Activated T-helper 2 cell treated with anti-CD3 and anti-CD28 coated beads, Interferon-gamma antibody, Interleukin-2, Interleukin-4, amounts not matched to agents 10 μg/mL and 5 μg/mL and 100 μg/mL, durations not matched to agents 14 hours and 24 hours and 36 hours (primary cell): ENCODE measurements at regions of chr5 and their contacts with region 1.

Region 1: DNA sequence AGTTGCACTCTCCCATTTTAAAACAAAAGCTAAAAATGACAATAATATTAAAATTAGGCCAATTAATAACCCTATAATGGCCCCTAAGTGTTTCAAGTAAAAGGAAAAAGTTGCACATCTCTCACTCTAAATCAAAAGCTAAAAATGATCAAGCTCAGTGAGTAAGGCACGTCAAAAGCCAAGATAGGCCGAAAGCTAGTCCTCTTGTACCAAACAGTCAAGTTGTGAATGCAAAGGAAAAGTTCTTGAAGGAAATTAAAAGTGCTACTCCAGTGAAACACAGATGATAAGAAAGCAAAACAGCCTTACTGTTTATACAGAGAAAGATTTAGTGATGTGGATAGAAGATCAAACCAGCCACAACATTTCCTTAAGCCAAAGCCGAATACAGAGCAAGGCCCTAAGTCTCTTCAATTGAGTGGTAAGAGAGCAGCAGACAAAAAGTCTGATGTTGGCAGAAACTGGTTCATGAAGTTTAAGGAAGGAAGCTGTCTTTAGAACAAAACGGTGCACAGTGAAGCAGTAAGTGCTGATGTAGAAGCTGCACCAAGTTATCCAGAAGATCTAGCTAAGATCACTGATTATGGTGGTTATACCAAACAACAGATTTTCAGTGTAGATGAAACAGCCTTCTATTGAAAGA is 144.1 kb upstream of the ACOT12 start:
- DNase-seq: no peak
- H3K4me3 Mint-ChIP-seq: peak overlapping the region; percentile 6
- H3K27ac Mint-ChIP-seq: peak overlapping the region; percentile 64
- H3K4me1 Mint-ChIP-seq: peaks cover 50% of the 10 kb centered on the region
- H3K27me3 Mint-ChIP-seq: no peaks in the 10 kb centered on the region

Region 2: GRCh38 chr5:81525690-81526089 is 12.3 kb before region 1 on chr5:
- intact Hi-C with region 1: loop called (anchors 2 kb)
- DNase-seq: no peak
- H3K4me3 Mint-ChIP-seq: no peak overlapping the region
- H3K27ac Mint-ChIP-seq: peak overlapping the region; percentile 79
- H3K4me1 Mint-ChIP-seq: peaks cover 27% of the 10 kb centered on the region
- H3K27me3 Mint-ChIP-seq: no peaks in the 10 kb centered on the region

Region 3: GRCh38 chr5:81556809-81557208 is 18.8 kb after region 1 on chr5:
- intact Hi-C with region 1: loop called (anchors 2 kb)
- DNase-seq: no peak
- H3K4me3 Mint-ChIP-seq: no peak overlapping the region
- H3K27ac Mint-ChIP-seq: no peak overlapping the region
- H3K4me1 Mint-ChIP-seq: peaks cover 31% of the 10 kb centered on the region
- H3K27me3 Mint-ChIP-seq: no peaks in the 10 kb centered on the region